PC-9 (cell line): ENCODE measurements at regions of chr10 and their contacts with region 1.

Region 1: DNA sequence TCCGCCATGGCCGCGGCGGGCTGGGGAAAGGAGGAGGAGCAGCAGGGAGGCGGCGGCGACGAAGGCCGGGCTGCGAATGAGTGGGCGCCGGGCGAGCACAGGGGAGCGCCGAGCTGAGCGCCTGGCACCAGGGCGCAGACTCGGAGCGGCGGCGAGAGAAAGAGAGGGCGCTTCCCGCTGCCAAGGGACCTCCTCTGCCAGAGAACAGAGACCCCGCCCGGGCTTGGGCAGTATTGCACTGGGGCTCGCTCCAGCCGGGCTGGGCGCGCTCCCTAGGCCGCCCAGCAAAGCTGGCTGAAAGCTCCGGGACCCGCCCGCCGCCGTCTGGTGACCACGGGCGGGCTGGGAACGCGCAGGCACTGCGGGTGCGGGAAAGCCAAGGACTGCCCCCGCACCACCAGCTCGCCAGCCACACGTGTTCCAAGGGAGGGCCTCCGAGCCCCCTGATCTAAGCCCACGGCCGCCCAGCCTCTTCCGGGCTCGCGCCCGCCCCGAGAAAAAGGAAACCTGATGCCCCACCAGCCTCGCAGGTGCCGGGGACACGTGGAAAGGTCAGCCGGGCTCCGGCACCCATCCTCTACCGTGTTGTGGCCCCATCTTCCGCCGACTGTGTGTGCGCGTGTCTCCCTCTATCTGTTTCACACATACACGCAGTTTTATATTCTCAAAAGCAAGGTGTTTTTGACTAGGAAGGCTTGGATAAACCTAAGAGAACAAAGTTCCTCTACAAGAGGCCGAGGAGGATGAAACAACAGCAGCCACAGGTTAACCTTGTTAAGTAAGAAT is at the start of gene CCDC6:
- DNase-seq: peak; percentile 84 to 96
- H3K4me3 ChIP-seq: peak within 1 kb of the TSS; percentile 94
- H3K27ac ChIP-seq: peak within 1 kb of the TSS; percentile 97
- H3K4me1 ChIP-seq: peaks cover 52% of the 10 kb centered on the region
- H3K27me3 ChIP-seq: no peaks in the 10 kb centered on the region
- CTCF ChIP-seq: peak; percentile 66
- total RNA-seq, gene CCDC6: 66.2 and 91.9 TPM in 2 replicates

Region 2: GRCh38 chr10:59678884-59679301 is 227.7 kb before region 1 on chr10:
- CTCF ChIA-PET with region 1: no interaction called
- POLR2A ChIA-PET with region 1: no interaction called
- intact Hi-C with region 1: no loop called
- DNase-seq: peak; percentile 55 to 86
- H3K4me3 ChIP-seq: no peak overlapping the region
- H3K27ac ChIP-seq: peak overlapping the region; percentile 15
- H3K4me1 ChIP-seq: 0 out of 2 replicates have a peak, but pooled peaks cover 6% of the 10 kb centered on the region
- H3K27me3 ChIP-seq: no peaks in the 10 kb centered on the region
- CTCF ChIP-seq: no peak

Region 3: DNA sequence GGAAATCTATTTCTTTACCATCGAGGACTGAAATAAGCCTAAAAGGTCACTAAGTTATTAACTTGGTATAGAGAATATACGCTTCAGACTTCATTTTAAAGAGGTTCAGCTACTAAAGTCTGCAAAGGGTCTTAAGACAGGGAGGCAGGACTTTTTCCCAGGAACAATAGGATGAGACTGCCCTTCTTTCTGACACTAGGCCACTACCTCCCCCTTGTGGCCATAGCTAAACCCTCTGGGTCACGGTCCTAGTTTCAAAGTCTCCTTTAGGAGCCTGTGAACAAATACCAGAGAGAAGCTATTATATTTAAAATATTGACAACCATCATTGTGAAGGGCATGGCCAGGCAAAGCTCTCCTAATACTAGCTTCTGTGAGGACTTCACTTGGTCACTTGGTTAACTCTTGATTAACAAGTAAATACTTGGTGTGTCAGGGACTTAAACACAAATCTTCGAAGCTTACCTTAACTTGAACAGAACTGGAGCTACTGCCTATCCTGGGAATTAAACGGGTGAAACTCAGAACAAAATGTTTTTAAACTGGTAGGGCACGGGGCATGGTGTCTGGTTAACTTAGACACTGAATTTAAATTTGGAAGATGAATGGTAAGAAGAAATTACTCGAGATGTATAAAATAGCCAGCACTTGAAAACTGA is 75.9 kb before region 1 on chr10:
- CTCF ChIA-PET with region 1: interaction called, 5 read pairs
- POLR2A ChIA-PET with region 1: no interaction called
- intact Hi-C with region 1: loop called (anchors 2 kb)
- DNase-seq: peak in 1 of 2 experiments; percentile 29
- H3K4me3 ChIP-seq: no peak overlapping the region
- H3K27ac ChIP-seq: no peak overlapping the region
- H3K4me1 ChIP-seq: no peaks in the 10 kb centered on the region
- H3K27me3 ChIP-seq: no peaks in the 10 kb centered on the region
- CTCF ChIP-seq: peak; percentile 88

Region 4: GRCh38 chr10:59954296-59954695 is 47.7 kb after region 1 on chr10:
- CTCF ChIA-PET with region 1: interaction called, 12 read pairs
- POLR2A ChIA-PET with region 1: interaction called, 8 read pairs
- intact Hi-C with region 1: no loop called
- DNase-seq: peak in 1 of 2 experiments; percentile 44
- H3K4me3 ChIP-seq: no peak overlapping the region
- H3K27ac ChIP-seq: peak overlapping the region; percentile 4
- H3K4me1 ChIP-seq: peaks cover 22% of the 10 kb centered on the region; the same call in 1 of the 2 replicates
- H3K27me3 ChIP-seq: no peaks in the 10 kb centered on the region
- CTCF ChIP-seq: no peak

Region 5: DNA sequence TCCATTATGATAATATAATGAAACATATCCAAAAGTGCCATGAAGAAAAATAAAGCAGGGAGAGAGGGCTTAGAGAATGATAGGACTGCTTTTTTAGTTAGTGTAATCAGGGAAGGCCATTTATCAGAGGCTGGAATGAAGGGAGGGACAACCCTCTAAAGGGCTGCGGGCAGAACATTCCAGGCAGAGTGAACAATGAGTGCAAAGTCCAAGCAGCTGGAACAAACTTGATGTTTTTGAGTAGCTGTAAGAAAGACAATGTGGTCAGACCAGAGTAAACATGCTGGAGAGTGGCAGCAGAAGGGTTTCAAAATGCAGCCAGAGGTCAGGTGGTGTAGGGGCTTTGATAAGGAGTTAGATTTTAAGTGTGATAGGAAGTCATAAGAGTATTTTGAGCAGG is 65.3 kb after region 1 on chr10:
- CTCF ChIA-PET with region 1: no interaction called
- POLR2A ChIA-PET with region 1: interaction called, 18 read pairs
- intact Hi-C with region 1: no loop called
- DNase-seq: peak; percentile 53 to 80
- H3K4me3 ChIP-seq: no peak overlapping the region
- H3K27ac ChIP-seq: peak overlapping the region; percentile 6; the same call in 1 of the 2 replicates
- H3K4me1 ChIP-seq: peaks cover 48% of the 10 kb centered on the region
- H3K27me3 ChIP-seq: no peaks in the 10 kb centered on the region
- CTCF ChIP-seq: no peak

Region 6: GRCh38 chr10:60008816-60009215 is 102.2 kb after region 1 on chr10:
- CTCF ChIA-PET with region 1: no interaction called
- POLR2A ChIA-PET with region 1: no interaction called
- intact Hi-C with region 1: loop called (anchors 5 kb)
- DNase-seq: peak in 1 of 2 experiments; percentile 69
- H3K4me3 ChIP-seq: no peak overlapping the region
- H3K27ac ChIP-seq: no peak overlapping the region
- H3K4me1 ChIP-seq: no peaks in the 10 kb centered on the region
- H3K27me3 ChIP-seq: no peaks in the 10 kb centered on the region
- CTCF ChIP-seq: no peak

Region 7: DNA sequence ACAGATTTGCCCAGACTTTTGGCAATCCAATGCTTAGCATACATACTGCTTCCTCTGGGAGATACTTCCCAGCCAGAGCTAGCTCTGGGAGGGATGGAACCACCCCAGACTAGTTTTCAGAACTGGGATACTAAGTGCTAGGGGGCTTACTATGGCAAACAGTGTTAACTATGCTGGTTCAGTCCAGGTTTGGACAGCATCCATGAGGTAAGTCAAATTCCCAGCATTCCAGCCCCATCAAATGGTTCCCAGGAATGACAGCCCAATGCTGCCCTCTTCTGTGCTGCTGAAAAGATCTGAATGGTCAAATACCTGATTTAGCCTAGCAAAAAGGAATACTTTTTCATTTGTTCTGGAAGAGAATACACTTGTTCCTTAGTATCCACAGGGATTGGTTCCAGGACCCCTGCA is 141.5 kb after region 1 on chr10:
- CTCF ChIA-PET with region 1: no interaction called
- POLR2A ChIA-PET with region 1: no interaction called
- intact Hi-C with region 1: loop called (anchors 1 kb)
- DNase-seq: peak; percentile 51
- H3K4me3 ChIP-seq: no peak overlapping the region
- H3K27ac ChIP-seq: no peak overlapping the region
- H3K4me1 ChIP-seq: no peaks in the 10 kb centered on the region
- H3K27me3 ChIP-seq: no peaks in the 10 kb centered on the region
- CTCF ChIP-seq: peak; percentile 78